ENCODE measurements at regions of chr17 and their contacts with region 1.

Region 1: GRCh38 chr17:41403798-41404671 is 6.6 kb upstream of the KRT31 start:
- DNase-seq: peak; percentile 66 to 97
- H3K4me3 ChIP-seq: no peak overlapping the region
- H3K27ac ChIP-seq: peak overlapping the region; percentile 89
- H3K4me1 ChIP-seq: peaks cover 48% of the 10 kb centered on the region
- H3K27me3 ChIP-seq: no peaks in the 10 kb centered on the region
- CTCF ChIP-seq: no peak

Region 2: GRCh38 chr17:40726919-40727318 is 677.1 kb before region 1 on chr17:
- CTCF ChIA-PET with region 1: no interaction called
- POLR2A ChIA-PET with region 1: no interaction called
- intact Hi-C with region 1: no loop called
- DNase-seq: no peak
- H3K4me3 ChIP-seq: no peak overlapping the region
- H3K27ac ChIP-seq: no peak overlapping the region
- H3K4me1 ChIP-seq: peaks cover 13% of the 10 kb centered on the region
- H3K27me3 ChIP-seq: no peaks in the 10 kb centered on the region
- CTCF ChIP-seq: peak; percentile 43; the same call in 1 of the 2 replicates

Region 3: DNA sequence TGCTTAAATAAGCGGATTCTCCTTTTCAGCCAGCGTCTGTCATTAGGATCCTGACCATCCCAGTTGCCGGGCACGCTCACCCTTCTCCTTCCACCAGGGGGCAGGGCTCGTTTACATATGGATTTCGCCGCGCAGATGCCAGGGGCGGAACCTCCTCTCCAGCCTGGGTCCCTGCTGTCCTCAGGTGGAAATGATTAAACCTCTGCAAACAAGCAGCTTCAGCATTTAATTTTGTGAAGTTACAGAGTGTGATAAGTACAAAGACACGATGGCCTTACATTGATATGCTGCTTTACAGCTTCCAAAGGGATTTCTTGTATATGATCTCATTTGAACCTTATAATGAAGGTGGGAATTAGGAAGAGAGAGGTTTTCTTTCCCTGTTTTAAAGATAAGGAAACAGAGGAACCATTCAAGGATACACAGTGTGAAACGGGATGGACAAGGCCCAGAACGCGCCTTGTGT is 600.4 kb before region 1 on chr17:
- CTCF ChIA-PET with region 1: interaction called, 3 read pairs
- POLR2A ChIA-PET with region 1: no interaction called
- intact Hi-C with region 1: loop called (anchors 5 kb)
- DNase-seq: peak; percentile 74 to 82
- H3K4me3 ChIP-seq: no peak overlapping the region
- H3K27ac ChIP-seq: 0 out of 2 replicates have a peak overlapping the region, but pooled peaks have one; percentile 18
- H3K4me1 ChIP-seq: peaks cover 9% of the 10 kb centered on the region
- H3K27me3 ChIP-seq: no peaks in the 10 kb centered on the region
- CTCF ChIP-seq: peak; percentile 94

Region 4: DNA sequence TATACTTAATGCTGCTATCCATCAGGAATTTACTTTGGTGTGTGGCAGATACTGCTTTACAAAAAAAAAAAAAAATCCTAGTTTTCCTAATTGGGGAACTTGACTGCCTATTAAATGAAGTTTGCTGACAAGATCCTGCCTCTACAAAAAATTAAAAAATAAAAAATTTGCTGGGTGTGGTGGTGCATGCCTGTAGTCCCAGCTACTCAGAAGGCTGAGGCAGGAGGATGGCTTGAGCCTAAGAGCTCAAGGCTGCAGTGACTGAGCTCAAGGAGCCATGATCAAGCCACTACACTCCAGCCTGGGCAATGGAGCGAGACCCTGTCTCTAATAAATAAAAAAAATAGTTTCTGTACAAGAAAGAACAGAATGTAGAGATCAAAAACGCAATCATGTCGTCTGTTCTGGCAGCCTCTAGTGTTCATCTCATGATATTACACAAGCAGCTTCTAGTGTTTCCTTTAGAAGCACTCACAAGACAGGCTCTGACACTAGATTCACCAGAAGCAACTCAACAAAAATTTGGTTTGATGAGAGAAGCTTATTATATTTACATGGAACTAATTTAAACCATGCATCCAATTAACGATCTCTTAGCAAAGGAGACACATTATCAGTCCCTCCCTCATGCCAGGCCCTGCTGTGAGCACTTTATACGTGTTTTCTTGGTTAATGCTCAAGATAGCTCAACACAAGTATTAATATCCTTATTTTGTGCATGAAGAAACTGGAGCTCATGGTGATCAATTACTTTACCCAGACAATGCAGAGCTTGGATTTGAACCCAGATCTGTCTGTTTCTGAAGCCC is 81.7 kb before region 1 on chr17:
- CTCF ChIA-PET with region 1: no interaction called
- POLR2A ChIA-PET with region 1: no interaction called
- intact Hi-C with region 1: no loop called
- DNase-seq: peak in 1 of 2 experiments; percentile 22
- H3K4me3 ChIP-seq: no peak overlapping the region
- H3K27ac ChIP-seq: no peak overlapping the region
- H3K4me1 ChIP-seq: no peaks in the 10 kb centered on the region
- H3K27me3 ChIP-seq: no peaks in the 10 kb centered on the region
- CTCF ChIP-seq: peak; percentile 80

Region 5: DNA sequence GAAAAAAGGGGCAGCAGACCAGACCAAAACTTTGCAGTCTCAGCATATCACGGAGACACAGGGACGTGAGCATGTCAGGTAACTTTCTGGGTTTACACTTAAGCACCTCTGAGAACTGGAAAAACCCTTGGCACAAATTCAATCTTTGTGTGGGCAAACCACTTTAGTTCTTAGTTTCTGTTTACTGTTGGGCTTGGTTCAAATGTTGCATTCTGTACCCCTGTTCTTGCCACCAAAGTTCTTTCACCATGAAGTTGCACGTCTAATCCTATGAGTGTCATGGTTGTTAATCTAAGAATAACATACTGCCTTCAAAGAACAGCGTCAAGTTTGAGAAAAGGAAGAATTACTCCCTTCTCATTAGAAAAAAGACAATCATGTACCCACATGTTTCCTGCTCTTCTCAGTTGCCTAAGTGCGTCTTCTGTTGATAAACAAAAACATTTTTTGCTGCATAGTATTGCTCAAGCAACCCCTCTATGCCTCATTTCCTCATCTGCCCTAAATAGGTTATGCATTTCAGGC is 65.0 kb before region 1 on chr17:
- CTCF ChIA-PET with region 1: no interaction called
- POLR2A ChIA-PET with region 1: no interaction called
- intact Hi-C with region 1: loop called (anchors 5 kb)
- DNase-seq: peak in 1 of 2 experiments; percentile 39
- H3K4me3 ChIP-seq: no peak overlapping the region
- H3K27ac ChIP-seq: peak overlapping the region; percentile 53
- H3K4me1 ChIP-seq: peaks cover 54% of the 10 kb centered on the region
- H3K27me3 ChIP-seq: no peaks in the 10 kb centered on the region
- CTCF ChIP-seq: no peak

Region 6: GRCh38 chr17:41428591-41429291 is 24.7 kb after region 1 on chr17:
- CTCF ChIA-PET with region 1: no interaction called
- POLR2A ChIA-PET with region 1: no interaction called
- intact Hi-C with region 1: no loop called
- DNase-seq: no peak
- H3K4me3 ChIP-seq: no peak overlapping the region
- H3K27ac ChIP-seq: no peak overlapping the region
- H3K4me1 ChIP-seq: 0 out of 2 replicates have a peak, but pooled peaks cover 9% of the 10 kb centered on the region
- H3K27me3 ChIP-seq: no peaks in the 10 kb centered on the region
- CTCF ChIP-seq: no peak

Region 7: DNA sequence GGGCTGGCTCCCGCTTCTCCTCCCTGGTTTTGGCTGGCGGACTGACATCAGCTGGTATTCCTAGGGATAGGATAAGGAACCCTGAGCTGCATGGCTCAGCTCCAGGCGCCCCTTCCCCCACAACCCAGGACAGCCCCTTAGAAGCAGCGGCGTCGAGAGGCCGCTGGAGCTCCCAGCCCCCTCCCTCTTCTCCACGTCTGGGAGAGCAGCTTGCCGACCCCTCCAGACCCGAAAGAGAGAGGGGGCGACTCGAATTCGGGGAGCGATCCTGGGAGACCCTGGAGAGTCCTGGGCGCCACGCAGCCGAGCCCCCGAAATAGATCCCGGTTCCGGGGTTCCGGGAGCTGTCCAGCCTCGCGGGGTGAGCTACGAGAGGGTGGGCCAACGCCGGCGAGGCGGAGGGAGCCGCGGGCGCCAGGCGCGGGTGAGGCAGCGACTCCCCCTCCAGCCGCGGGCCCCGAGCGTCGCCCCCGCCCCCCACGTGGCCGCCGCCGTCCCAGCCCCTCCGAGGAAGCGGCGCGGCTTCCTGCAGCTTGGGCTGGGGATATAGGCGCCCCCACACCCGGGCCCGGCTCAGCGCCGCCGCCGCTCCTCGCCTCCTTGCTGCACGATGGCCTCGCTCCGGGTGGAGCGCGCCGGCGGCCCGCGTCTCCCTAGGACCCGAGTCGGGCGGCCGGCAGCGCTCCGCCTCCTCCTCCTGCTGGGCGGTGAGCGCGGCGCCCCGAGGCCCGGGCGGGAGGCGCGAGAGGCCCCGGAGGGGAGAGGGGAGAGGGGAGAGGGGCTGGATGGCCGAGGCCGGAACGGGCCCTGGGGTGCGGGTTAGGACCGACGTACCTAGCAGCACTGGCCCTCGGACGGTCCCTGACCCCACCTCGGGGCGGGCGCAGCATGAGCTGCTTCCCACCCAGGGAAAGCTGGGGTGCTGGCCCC is 1356.9 kb after region 1 on chr17 and contains the start of gene RAMP2:
- CTCF ChIA-PET with region 1: no interaction called
- POLR2A ChIA-PET with region 1: no interaction called
- intact Hi-C with region 1: no loop called
- DNase-seq: peak in 1 of 2 experiments; percentile 18
- H3K4me3 ChIP-seq: peak within 1 kb of the TSS; percentile 18; the same call in 1 of the 2 replicates
- H3K27ac ChIP-seq: no peak within 1 kb of the TSS
- H3K4me1 ChIP-seq: no peaks in the 10 kb centered on the region
- H3K27me3 ChIP-seq: peaks cover 17% of the 10 kb centered on the region
- CTCF ChIP-seq: no peak
- total RNA-seq, gene RAMP2: 1.1 TPM in 1 of 2 replicates, not detected in the other

Measured in PC-9 (cell line).